Ascending aorta (tissue), 2 donors: ENCODE measurements at regions of chr9 and their contacts with region 1.

Region 1: DNA sequence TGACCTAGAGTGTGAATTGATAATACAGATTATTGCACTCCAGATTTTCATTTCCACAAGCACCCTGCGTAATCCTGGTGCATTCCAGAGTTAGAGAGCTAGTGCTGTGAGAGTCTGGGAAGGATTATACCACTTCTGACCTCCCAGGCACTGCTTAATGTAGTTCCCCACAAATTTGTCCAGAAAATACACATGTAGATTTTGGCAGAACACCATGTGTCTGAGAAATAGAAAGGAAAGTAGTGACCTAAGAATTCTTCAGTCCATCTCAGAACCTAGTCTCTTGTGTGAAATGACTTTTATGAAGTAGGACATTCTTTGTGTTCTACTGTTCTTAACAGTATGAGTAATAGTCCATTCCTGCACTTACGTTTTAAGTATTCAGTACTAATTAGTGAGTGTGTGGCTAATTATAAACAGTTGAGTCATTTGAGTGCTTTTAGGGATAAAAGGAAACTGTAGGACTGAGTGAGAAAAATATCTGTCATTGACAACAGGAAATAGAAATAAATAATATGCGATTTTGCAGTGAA is 27.8 kb upstream of the PTPDC1 start:
- DNase-seq: no peak
- H3K4me3 ChIP-seq: peak overlapping the region in 1 of 2 donors; percentile 7
- H3K27ac ChIP-seq: peak overlapping the region; percentile 59 to 61
- H3K4me1 ChIP-seq: peaks cover 0 to 6% of the 10 kb centered on the region in 2 donors
- H3K27me3 ChIP-seq: no peaks in the 10 kb centered on the region
- CTCF ChIP-seq: no peak

Region 2: DNA sequence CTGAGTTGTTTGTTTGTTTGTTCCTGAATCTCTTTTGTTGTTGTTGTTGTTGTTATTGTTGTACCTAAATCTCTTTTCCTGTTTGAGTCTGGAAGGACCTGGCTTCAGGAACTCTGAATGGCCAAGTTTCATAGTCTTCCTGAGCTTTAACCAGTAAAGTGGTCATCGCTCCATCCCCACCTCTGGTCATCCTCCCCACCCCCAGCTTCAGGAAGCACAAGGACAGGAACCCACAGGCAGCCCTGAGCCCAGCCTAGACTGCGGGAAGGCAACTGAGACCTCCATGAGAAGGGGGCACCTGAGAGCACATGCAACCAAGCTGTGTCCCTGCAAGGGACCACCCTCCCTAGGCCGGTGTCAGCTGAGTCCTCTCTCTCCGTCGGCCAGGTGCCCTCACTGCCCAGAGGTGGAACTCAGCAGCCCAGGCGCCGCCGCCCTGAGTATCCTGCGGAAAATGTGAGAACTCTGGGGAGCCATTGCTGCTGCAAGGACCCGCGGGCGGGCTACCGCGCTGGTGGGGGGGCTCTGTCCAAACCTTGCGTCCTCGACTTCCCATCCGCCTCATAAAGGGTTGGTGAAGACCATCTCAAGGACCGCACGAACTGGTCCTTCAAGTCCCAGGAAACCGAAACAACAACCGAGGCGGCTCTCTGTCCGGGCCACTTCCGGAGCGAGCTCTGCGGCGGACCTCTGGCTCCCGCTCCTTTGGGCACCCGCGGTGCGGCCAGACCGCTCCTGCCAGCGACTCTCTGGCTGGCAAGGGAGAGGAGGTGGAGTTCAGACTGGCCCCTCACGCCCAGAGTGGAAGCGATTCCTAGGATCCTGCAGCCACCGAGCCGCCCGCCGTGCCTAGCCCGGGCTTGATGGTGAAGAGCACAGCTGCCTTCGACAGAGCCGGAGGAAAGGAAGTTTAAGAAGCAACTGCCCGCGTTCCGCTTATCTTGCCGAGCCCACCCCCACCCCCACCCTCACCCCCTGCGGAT is 105.6 kb before region 1 on chr9:
- intact Hi-C with region 1: no loop called
- DNase-seq: no peak
- H3K4me3 ChIP-seq: peak overlapping the region; percentile 60 to 67
- H3K27ac ChIP-seq: no peak overlapping the region
- H3K4me1 ChIP-seq: peaks cover 21 to 40% of the 10 kb centered on the region in 2 donors
- H3K27me3 ChIP-seq: peaks cover 35% of the 10 kb centered on the region
- CTCF ChIP-seq: no peak

Region 3: DNA sequence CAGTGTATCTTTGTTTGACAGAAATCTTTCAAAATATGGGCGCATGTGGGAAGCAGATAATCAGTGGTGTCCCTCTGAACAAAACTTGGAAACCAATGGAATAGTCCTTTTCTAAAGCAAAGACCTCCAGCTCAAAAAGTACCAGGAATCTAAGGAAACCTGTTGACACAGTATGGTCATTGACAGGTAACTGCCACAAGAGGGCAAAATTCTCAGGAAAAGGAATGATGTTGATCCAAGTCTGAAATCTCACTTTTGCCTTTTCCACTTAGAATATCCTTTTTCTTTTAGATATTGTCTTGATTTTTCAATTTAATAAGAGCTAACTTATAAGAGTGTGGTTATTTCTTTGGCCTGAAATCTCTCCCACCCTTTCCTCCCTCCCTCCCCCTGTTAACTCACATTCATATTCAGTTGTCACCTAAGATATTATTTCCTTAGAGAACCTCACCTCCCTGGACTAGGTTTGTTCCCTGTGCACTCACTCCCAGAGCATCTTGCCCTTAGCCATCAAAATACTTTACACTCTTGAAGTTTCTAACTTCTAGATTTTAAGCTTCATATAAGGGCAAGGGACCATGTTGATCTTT is 42.3 kb before region 1 on chr9:
- intact Hi-C with region 1: loop called (anchors 5 kb)
- DNase-seq: no peak
- H3K4me3 ChIP-seq: no peak overlapping the region
- H3K27ac ChIP-seq: no peak overlapping the region
- H3K4me1 ChIP-seq: peaks cover 0 to 4% of the 10 kb centered on the region in 2 donors
- H3K27me3 ChIP-seq: no peaks in the 10 kb centered on the region
- CTCF ChIP-seq: peak; percentile 27 to 55 (median 44)

Region 4: DNA sequence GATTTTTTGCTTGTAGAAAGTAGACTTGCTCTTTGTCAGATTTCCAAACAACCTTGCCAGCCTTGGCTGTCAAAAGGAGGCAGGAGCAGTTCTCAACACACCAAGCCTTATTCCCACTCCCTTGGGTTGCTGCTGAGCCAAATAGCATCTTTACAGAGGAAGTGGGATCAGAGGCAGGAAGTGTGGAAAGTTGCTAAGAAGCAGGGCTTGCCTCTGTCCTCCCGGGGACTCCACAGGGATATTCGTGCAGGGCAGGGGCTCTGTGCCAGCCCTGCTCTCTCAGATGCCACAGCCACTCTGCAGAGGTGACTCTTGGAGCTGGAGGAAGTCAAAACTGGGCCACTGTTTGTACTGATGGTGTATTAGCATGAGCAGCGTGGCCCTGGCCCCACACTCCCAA is 52.1 kb after region 1 on chr9:
- intact Hi-C with region 1: no loop called
- DNase-seq: peak in 1 of 2 donors; percentile 77
- H3K4me3 ChIP-seq: no peak overlapping the region
- H3K27ac ChIP-seq: peak overlapping the region; percentile 51 to 68
- H3K4me1 ChIP-seq: peaks cover 0 to 18% of the 10 kb centered on the region in 2 donors
- H3K27me3 ChIP-seq: no peaks in the 10 kb centered on the region
- CTCF ChIP-seq: no peak

Region 5: DNA sequence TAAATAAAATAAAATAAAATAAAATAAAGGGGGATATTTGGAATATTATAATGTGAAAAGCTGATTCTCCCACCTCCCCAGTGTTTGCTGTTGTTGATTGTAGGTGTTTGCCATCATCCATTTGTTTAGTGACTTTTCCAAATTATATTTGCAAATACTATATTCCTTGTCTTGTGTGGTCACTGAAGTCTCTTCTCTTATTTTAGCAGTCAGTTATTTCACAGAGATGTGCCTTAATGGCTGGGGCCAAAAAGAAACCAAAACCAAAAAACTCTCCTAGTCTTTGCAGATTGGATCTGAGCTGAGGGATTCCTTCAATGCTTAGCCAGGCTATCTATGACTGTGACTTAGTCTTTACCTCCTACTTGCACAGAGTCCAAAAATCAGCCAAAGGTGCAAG is 131.7 kb after region 1 on chr9:
- intact Hi-C with region 1: no loop called
- DNase-seq: no peak
- H3K4me3 ChIP-seq: no peak overlapping the region
- H3K27ac ChIP-seq: no peak overlapping the region
- H3K4me1 ChIP-seq: no peaks in the 10 kb centered on the region
- H3K27me3 ChIP-seq: no peaks in the 10 kb centered on the region
- CTCF ChIP-seq: no peak